A673 (cell line): ENCODE measurements at regions of chrX and their contacts with region 1.

Region 1: GRCh38 chrX:15471016-15471415 is 22.1 kb downstream of the PIR start:
- DNase-seq: peak; percentile 81
- H3K4me3 ChIP-seq: no peak overlapping the region
- H3K27ac ChIP-seq: no peak overlapping the region
- H3K4me1 ChIP-seq: peaks cover 6% of the 10 kb centered on the region
- H3K27me3 ChIP-seq: no peaks in the 10 kb centered on the region
- CTCF ChIP-seq: peak; percentile 89

Region 2: DNA sequence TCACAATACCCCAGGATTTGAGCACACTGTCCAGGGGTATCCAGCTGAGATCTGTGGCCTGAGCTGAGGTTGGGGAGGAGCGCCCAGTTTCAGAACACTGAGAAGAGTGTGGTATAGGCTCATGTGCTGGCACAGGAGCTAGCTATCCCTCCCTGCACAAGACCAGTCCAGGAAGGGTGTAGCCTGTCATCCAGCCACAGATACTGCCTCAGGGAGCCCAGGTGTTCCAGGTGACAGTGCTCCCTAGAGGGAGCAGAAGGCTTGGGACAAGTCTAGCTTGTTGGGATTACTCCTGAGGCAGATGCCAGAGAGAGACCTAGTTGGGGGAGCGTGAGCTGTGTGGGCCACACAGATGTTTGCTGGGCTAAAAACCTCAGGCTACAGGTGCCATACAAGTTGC is 1021.2 kb before region 1 on chrX:
- CTCF ChIA-PET with region 1: no interaction called
- POLR2A ChIA-PET with region 1: no interaction called
- intact Hi-C with region 1: no loop called
- DNase-seq: no peak
- H3K4me3 ChIP-seq: no peak overlapping the region
- H3K27ac ChIP-seq: no peak overlapping the region
- H3K4me1 ChIP-seq: no peaks in the 10 kb centered on the region
- H3K27me3 ChIP-seq: no peaks in the 10 kb centered on the region
- CTCF ChIP-seq: no peak

Region 3: DNA sequence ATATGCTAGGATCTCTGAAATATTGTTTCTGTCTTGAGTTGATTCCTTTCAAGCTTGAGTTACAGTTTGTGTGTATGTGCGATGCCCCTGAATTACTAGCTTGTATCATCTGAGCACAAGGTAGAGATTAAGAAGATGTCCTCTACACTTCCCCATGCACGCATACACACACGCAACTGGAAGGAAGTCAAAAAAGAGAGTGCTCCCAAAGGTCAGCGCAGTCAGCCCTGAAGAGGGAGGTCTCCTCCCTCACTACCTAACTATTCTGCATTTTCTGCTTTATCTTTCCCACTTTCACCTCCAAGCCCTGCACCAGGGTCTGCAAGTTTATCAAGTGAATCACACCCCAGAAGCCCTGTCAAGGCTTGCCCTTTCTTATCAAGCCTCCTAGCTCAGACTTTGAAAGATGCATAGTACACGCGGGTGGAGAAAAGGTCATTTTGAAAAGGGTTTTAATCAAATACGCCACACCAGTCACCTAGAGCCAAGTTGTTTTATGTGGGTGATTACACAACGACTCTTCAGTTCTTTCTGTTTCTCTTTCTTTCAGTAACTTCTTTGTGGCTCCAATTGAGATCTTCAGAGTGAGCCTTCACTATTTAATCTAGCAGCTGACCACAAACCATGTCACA is 328.8 kb before region 1 on chrX:
- CTCF ChIA-PET with region 1: no interaction called
- POLR2A ChIA-PET with region 1: no interaction called
- intact Hi-C with region 1: no loop called
- DNase-seq: no peak
- H3K4me3 ChIP-seq: no peak overlapping the region
- H3K27ac ChIP-seq: no peak overlapping the region
- H3K4me1 ChIP-seq: no peaks in the 10 kb centered on the region
- H3K27me3 ChIP-seq: peaks cover 4% of the 10 kb centered on the region
- CTCF ChIP-seq: no peak

Region 4: GRCh38 chrX:15299941-15300851 is 170.8 kb before region 1 on chrX:
- CTCF ChIA-PET with region 1: interaction called, 10 read pairs
- POLR2A ChIA-PET with region 1: no interaction called
- intact Hi-C with region 1: loop called (anchors 1 kb)
- DNase-seq: peak; percentile 65
- H3K4me3 ChIP-seq: no peak overlapping the region
- H3K27ac ChIP-seq: no peak overlapping the region
- H3K4me1 ChIP-seq: peaks cover 17% of the 10 kb centered on the region
- H3K27me3 ChIP-seq: no peaks in the 10 kb centered on the region
- CTCF ChIP-seq: peak; percentile 64

Region 5: GRCh38 chrX:15349046-15349445 is 122.0 kb before region 1 on chrX:
- CTCF ChIA-PET with region 1: interaction called, 6 read pairs
- POLR2A ChIA-PET with region 1: no interaction called
- intact Hi-C with region 1: loop called (anchors 1 kb)
- DNase-seq: peak; percentile 82
- H3K4me3 ChIP-seq: no peak overlapping the region
- H3K27ac ChIP-seq: no peak overlapping the region
- H3K4me1 ChIP-seq: no peaks in the 10 kb centered on the region
- H3K27me3 ChIP-seq: peaks cover 3% of the 10 kb centered on the region
- CTCF ChIP-seq: peak; percentile 69